K562 (cell line): ENCODE measurements at regions of chr5 and their contacts with region 1.

Region 1: DNA sequence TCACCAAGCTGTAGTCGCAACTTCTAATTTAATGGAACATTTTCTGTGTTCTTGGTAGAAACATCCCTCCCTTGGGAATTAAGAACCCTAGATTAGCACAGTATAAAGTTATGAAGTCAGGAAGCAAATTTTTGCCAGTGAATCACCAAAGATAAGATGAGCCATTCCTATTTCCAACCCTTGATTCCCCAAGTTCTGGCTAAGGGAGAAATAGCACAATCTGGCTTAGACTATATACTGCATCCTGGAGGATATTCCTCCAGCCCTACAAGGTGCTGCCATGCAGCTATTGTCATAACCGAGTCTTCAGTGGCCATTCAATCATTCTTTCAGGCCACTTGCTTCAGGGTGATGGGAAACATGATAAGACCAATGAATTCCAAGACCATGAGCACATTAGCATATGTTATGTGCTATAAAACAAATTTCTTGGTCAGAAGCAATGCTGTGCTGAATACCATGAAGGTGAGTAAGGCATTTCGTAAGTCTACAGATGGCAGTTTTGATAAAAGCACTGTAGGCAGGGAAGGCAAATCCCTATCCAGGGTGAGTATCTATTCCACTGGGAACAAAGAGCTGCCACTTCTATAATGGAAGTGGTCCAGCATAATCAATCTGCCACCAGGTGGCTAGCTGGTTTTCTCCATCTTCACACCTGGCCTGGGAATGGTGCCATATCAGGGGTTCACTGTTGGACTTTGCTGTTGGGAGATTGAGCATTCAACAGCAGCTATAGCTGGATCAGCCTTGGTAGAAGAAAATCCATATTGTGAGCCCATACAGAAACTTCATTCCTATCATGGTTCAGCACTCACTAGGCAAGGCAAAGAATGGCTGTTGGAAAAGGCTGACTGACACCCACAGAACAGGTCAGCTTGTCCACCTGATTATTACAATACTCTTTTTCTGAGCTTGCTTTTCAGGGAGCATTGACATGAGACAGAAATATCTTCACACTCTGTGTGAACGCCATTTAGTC is 19.6 kb upstream of the ARL15 start:
- DNase-seq: no peak
- ATAC-seq: no peak
- H3K4me3 ChIP-seq: no peak overlapping the region
- H3K27ac ChIP-seq: no peak overlapping the region
- H3K4me1 ChIP-seq: peaks cover 8 to 31% of the 10 kb centered on the region in 2 experiments
- H3K27me3 ChIP-seq: no peaks in the 10 kb centered on the region
- CTCF ChIP-seq: no peak
- EP300 ChIP-seq: no peak
- POLR2A ChIP-seq: no peak
- RAD21 ChIP-seq: no peak

Region 2: DNA sequence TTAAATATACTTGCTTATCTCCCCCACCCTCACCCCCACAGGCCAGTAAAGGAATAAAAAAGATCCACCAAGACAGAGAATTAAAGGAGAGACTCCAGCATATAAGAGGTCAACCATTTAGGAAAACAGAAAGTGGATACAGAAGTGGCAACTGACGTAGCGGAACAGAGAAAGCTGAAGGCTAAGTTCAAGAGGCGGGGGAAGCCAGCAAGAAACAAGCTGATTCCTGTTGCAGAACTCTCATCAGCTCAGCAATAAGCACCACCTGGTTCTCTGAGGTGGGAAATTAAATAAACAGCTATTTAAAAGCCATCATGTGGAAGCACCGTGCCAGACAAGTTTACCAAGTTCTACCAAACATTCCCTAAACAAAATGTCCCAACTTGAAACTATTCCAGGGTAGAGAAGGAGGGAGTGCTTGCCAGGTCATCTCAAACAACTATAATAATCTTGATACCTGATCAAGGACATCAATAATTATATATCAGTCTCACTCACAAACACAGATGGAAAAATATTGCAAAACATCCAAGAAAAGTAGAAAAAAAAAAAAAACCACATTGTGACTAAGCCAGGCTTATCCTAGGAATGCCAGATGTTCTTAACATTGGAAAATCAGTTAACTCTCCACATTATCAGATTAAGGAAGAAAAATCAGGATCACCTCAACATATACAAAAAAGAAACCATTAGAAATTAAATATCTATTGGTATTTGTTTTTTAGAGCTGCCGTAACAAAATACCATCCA is 12.3 kb before region 1 on chr5:
- CTCF ChIA-PET with region 1: no interaction called
- POLR2A ChIA-PET with region 1: interaction called, 78 read pairs
- in situ Hi-C with region 1: no loop called
- intact Hi-C with region 1: loop called (anchors 1 kb)
- DNase-seq: no peak
- ATAC-seq: no peak
- H3K4me3 ChIP-seq: no peak overlapping the region
- H3K27ac ChIP-seq: peak overlapping the region; percentile 18; the same call in 1 of the 3 replicates
- H3K4me1 ChIP-seq: peaks cover 5 to 65% of the 10 kb centered on the region in 2 experiments; a peak in 4 of 5 replicates
- H3K27me3 ChIP-seq: no peaks in the 10 kb centered on the region
- CTCF ChIP-seq: no peak
- EP300 ChIP-seq: no peak
- POLR2A ChIP-seq: no peak; the same call in 1 of the 2 replicates
- RAD21 ChIP-seq: no peak

Region 3: DNA sequence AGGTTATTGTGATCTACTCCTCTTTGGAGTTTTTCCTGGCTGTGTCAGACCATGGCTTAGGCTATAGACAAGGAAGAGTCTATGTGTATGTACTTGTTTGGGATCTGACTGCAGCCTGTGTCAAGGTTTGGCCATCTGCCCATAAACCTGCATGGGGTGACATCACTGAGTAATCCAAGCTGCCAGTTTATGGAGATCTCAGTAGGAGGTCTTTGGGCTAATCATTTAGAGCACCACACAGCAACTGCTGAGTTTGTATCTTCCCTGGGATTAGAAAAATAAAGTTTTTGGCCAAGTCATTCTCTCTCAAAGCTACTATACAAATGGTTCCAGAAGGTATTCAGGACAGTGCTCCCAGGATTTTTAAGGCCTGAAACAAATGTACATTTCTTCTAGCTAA is 60.0 kb after region 1 on chr5:
- CTCF ChIA-PET with region 1: no interaction called
- POLR2A ChIA-PET with region 1: no interaction called
- in situ Hi-C with region 1: no loop called
- intact Hi-C with region 1: loop called (anchors 5 kb)
- DNase-seq: peak; percentile 75 to 90 (median 78)
- ATAC-seq: peak; percentile 85
- H3K4me3 ChIP-seq: no peak overlapping the region
- H3K27ac ChIP-seq: peak overlapping the region; percentile 86
- H3K4me1 ChIP-seq: peaks cover 0 to 50% of the 10 kb centered on the region in 2 experiments; a peak in 3 of 5 replicates
- H3K27me3 ChIP-seq: no peaks in the 10 kb centered on the region
- CTCF ChIP-seq: no peak
- EP300 ChIP-seq: no peak; the same call in 1 of the 2 replicates
- POLR2A ChIP-seq: no peak
- RAD21 ChIP-seq: no peak